Activated CD4-positive, alpha-beta T cell treated with anti-CD3 and anti-CD28 coated beads for 36 hours (primary cell): ENCODE measurements at regions of chr1 and their contacts with region 1.

Region 1: GRCh38 chr1:21294266-21294989 is 4.2 kb upstream of the ECE1 start:
- DNase-seq: peak; percentile 93
- ATAC-seq: peak; percentile 61
- H3K4me3 Mint-ChIP-seq: peak overlapping the region; percentile 86
- H3K27ac Mint-ChIP-seq: peak overlapping the region; percentile 97
- H3K4me1 Mint-ChIP-seq: peaks cover 86% of the 10 kb centered on the region
- H3K27me3 Mint-ChIP-seq: no peaks in the 10 kb centered on the region

Region 2: DNA sequence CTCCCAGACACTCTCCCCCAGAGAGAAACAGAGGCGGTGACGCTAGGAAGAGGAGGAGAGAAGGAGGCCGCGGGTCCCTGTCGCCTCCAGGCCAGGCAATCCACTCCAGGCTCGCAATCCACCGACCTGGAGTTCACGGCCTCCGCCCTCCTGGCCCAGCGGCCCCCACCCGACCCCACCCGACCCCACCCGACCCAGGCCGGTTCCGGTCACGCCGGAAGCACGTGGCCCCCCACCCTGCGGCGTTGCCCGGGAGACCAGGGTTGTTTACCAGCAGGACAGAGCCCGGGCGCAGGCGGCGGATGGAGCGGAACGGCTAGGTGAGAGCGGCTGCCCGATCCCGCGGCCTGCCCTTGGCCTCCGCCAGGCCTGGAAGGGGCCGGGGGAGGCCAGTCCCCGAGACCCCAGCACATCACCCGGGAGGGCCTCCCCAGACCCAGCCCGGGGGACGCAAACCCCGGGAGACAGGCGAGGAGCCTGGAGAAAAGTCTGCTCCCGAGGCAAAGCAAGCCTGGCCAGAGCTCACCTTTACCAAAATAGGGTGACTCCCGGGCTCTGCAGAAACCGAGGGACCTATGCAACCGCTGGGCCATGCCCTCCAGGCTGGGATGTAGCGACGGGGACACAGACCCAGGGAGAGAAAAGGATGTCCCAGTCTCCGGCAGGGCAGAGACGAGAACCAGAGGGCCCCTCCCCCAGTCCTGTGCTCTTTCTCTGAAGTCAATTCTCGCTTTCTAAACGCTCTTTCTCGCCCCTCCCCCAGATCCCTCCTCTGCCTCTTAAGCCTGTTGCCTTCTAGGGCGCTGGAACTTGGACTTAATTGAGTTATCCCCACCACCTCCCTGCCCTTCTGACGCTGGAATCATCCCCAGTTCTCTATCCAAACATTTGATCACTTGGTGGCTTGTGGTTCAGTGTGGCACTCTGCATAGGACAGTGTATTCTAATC is 1108.3 kb before region 1 on chr1 and contains the starts of genes PLA2G2C and UBXN10:
- CTCF ChIA-PET with region 1: no interaction called
- POLR2A ChIA-PET with region 1: interaction called, 3 read pairs
- intact Hi-C with region 1: loop called in 1 of 2 experiments (anchors 5 kb)
- DNase-seq: peak; percentile 90
- ATAC-seq: peak; percentile 70
- H3K4me3 Mint-ChIP-seq: peak within 1 kb of the TSS; percentile 68
- H3K27ac Mint-ChIP-seq: peak within 1 kb of the TSS; percentile 85
- H3K4me1 Mint-ChIP-seq: peaks cover 42% of the 10 kb centered on the region
- H3K27me3 Mint-ChIP-seq: peaks cover 15% of the 10 kb centered on the region
- total RNA-seq, gene PLA2G2C: 0.43 to 0.58 TPM
- total RNA-seq, gene UBXN10: 0.41 to 0.63 TPM

Region 3: DNA sequence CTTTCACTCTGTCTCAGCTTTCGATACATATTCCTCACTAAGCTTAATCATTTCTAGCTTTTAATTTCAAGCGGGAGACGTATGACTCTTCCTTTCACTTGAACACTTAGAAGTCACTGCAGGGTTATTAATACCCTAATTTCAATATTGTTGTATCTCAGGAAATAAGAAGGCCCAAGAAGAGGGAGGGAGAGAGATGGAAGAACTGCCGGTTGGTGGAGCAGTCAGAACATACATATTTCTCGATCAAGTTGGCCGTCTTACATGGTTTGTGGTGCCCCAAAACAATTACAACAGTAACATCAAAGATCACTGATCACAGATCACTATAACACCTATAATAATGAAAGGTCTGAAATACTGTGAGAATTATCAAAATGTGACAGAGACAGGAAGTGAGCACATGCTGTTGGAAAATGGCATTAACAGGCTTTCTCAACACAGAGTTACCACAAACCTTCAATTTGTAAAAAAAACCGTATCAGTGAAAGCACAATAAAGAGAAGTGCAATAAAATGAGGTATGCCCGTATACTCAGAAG is 361.9 kb before region 1 on chr1:
- CTCF ChIA-PET with region 1: no interaction called
- POLR2A ChIA-PET with region 1: no interaction called
- intact Hi-C with region 1: loop called (anchors 1 to 5 kb)
- DNase-seq: peak; percentile 65
- ATAC-seq: peak; percentile 84
- H3K4me3 Mint-ChIP-seq: peak overlapping the region; percentile 13
- H3K27ac Mint-ChIP-seq: peak overlapping the region; percentile 91
- H3K4me1 Mint-ChIP-seq: peaks cover 37% of the 10 kb centered on the region
- H3K27me3 Mint-ChIP-seq: no peaks in the 10 kb centered on the region

Region 4: GRCh38 chr1:21255278-21255942 is 39.0 kb before region 1 on chr1:
- CTCF ChIA-PET with region 1: interaction called, 5 read pairs
- POLR2A ChIA-PET with region 1: interaction called, 3 read pairs
- intact Hi-C with region 1: loop called (anchors 1 to 5 kb)
- DNase-seq: peak; percentile 90
- ATAC-seq: peak; percentile 64
- H3K4me3 Mint-ChIP-seq: no peak overlapping the region
- H3K27ac Mint-ChIP-seq: peak overlapping the region; percentile 84
- H3K4me1 Mint-ChIP-seq: peaks cover 48% of the 10 kb centered on the region
- H3K27me3 Mint-ChIP-seq: no peaks in the 10 kb centered on the region

Region 5: GRCh38 chr1:21324368-21325141 is 30.1 kb after region 1 on chr1:
- CTCF ChIA-PET with region 1: interaction called, 29 read pairs
- POLR2A ChIA-PET with region 1: interaction called, 62 read pairs
- intact Hi-C with region 1: loop called (anchors 1 kb)
- DNase-seq: peak; percentile 90
- ATAC-seq: peak; percentile 87
- H3K4me3 Mint-ChIP-seq: peak overlapping the region; percentile 57
- H3K27ac Mint-ChIP-seq: peak overlapping the region; percentile 84
- H3K4me1 Mint-ChIP-seq: peaks cover 81% of the 10 kb centered on the region
- H3K27me3 Mint-ChIP-seq: no peaks in the 10 kb centered on the region

Region 6: DNA sequence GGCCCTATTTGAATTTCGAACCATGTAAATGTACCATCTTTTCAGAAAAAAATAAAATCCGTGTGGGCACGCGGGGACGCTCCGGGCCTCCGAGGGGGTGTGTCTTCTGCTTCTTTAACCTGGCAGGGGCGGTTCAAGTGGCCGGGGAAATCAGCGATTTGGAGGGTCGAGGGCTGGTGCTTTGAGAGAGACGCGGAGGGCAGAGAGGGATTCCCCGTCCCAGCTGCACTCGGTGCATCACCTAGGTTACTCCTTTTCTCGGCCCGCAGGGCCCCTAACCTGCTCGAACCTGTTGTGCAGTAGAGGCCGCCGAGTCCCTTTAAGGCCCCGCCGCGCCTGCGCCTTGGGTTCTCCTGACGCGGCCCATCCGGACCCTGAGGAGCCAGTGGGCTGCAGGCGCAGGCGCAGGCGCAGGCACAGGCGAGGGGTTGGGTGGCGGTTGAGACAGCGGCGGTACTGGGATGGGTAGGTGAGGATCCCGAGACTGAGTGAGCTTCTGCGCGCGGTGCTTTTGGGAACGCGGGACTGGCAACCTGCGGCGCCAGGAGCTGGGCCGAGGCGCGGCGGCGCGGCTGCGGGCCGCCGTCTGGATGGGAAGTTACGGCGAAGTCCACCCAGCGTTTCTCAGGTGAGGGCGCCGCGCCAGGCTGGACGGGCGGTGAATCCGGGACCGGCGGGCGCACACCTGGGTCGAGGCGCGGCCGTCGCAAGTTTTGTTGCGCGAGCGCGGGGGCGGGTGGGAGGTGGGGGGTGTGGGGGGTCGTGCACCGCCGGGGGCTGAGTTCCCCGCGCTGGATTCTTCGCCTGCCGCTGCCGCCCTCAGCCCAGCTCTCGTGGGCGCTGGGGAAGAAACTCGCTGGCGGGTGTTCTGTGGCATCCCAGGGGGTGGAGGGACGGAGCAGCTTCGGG is 145.5 kb after region 1 on chr1 and contains the start of gene NBPF3:
- CTCF ChIA-PET with region 1: no interaction called
- POLR2A ChIA-PET with region 1: no interaction called
- intact Hi-C with region 1: loop called in 1 of 2 experiments (anchors 1 kb)
- DNase-seq: peak; percentile 96
- ATAC-seq: peak; percentile 98
- H3K4me3 Mint-ChIP-seq: peak within 1 kb of the TSS; percentile 91
- H3K27ac Mint-ChIP-seq: peak within 1 kb of the TSS; percentile 93
- H3K4me1 Mint-ChIP-seq: peaks cover 17% of the 10 kb centered on the region
- H3K27me3 Mint-ChIP-seq: peaks cover 3% of the 10 kb centered on the region
- total RNA-seq, gene NBPF3: 8.5 to 9.9 TPM

Region 7: DNA sequence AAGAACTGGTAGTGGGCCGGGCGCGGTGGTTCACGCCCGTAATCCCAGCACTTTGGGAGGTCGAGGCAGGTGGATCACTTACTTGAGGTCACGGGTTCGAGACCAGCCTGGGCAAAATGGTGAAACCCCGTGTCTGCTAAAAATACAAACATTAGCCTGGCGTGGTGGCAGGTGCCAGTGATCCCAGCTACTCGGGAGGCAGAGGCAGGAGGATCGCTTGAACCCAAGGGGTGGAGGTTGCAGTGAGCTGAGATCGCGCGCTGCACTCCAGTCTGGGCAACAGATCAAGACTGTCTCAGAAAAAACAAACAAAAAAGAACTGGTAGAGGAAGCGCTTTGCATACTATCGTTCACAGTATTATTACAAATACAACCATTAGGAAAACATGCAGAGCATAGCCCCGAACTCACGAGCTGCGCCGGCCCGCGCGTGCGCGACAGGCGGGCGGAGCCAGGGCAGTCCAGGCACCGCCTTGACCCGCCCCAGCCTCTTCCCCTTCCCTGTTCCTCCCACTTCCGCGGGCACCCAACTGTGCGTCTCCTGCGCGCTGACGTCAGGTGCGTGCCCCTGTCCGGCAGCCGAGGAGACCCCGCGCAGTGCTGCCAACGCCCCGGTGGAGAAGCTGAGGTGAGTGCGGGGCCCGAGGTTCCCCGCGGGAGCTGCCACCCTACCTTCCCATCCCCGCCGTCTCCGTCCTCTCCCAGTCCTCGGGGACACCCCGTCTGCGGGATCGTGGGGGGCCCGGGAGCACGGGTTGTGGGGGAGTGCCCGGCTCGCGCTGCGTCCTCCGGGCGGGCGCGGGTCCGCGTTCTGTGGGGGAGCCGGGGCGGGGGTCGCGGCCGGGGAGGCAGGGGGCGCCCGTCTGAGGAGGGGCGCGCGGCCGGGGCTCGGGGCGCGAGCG is 757.9 kb after region 1 on chr1 and contains the start of gene CDC42:
- CTCF ChIA-PET with region 1: no interaction called
- POLR2A ChIA-PET with region 1: no interaction called
- intact Hi-C with region 1: loop called in 1 of 2 experiments (anchors 2 kb)
- DNase-seq: peak; percentile 98
- ATAC-seq: peak; percentile 86
- H3K4me3 Mint-ChIP-seq: peak within 1 kb of the TSS; percentile 96
- H3K27ac Mint-ChIP-seq: peak within 1 kb of the TSS; percentile 98
- H3K4me1 Mint-ChIP-seq: peaks cover 56% of the 10 kb centered on the region
- H3K27me3 Mint-ChIP-seq: no peaks in the 10 kb centered on the region
- total RNA-seq, gene CDC42: 298 to 339 TPM